ENCODE measurements at regions of chr22 and their contacts with region 1.

Region 1: DNA sequence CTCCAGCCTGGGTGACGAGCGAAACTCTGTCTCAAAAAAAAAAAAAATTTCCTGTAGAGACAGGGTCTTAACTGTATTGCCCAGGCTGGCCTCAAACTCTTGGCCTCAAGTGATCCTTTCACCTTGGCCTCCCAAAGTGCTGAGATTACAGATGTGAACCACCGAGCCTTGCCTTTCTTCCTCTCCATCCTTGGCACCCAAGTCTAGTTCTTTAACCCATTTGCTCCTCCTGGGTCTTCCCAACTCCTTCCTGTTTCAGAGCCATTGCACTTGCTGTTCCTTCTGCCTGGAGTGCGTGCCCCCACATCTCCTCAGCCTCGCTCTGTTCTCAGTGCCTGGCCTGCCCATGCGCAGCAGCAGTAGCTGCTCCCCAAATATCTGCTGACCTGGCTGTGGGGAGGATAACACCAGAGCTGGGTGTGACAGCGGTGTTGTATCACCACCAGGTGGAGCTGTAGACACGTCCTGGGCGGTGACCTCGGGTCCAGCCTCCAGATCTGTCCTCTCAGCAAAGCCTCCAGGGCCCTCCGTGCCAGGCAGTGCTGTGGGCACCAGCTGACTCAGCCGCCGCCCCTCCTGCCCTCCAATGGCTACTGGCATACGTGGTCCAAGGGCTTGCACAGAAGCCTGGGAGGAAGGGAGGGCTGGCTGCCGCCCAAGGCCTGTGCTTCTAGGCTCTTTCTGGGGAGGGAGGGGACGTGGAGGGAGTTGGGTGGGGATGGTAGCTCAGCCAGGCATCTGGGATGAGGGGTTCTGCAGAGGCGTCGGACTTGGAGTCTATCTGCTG is 22.0 kb downstream of the TEF start:
- DNase-seq: peak; percentile 86 to 87 (median 86)
- H3K4me3 ChIP-seq: no peak overlapping the region
- H3K27ac ChIP-seq: no peak overlapping the region
- H3K4me1 ChIP-seq: peaks cover 11% of the 10 kb centered on the region
- H3K27me3 ChIP-seq: no peaks in the 10 kb centered on the region
- CTCF ChIP-seq: peak; percentile 93 to 97 (median 97)
- EP300 ChIP-seq: no peak
- POLR2A ChIP-seq: no peak

Region 2: DNA sequence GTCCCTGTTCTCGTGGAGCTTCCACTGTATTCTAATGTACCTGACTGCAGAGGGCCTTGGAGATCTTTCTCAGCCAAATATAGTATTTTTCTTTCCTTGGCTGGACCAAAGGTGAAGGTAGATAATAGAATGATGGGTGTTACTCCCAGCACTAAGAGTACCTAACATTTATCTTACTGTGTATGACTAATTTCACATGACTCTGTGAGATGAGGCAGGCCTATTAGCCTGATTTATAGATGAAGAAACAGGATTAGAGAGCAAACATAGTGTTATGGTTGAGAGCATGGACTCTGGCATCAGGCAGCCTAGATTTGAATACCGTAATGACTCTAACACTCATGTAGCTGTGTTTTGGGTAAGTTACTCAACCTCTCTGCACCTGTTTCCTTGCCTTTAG is 67.8 kb after region 1 on chr22:
- intact Hi-C with region 1: loop called in 1 of 4 experiments (anchors 2 kb)
- DNase-seq: no peak
- H3K4me3 ChIP-seq: no peak overlapping the region
- H3K27ac ChIP-seq: no peak overlapping the region
- H3K4me1 ChIP-seq: peaks cover 4% of the 10 kb centered on the region
- H3K27me3 ChIP-seq: no peaks in the 10 kb centered on the region
- CTCF ChIP-seq: no peak
- EP300 ChIP-seq: no peak
- POLR2A ChIP-seq: no peak

Region 3: GRCh38 chr22:41517172-41518047 is 113.7 kb after region 1 on chr22:
- intact Hi-C with region 1: loop called (anchors 2 to 5 kb)
- DNase-seq: peak; percentile 72 to 86 (median 84)
- H3K4me3 ChIP-seq: no peak overlapping the region
- H3K27ac ChIP-seq: no peak overlapping the region
- H3K4me1 ChIP-seq: peaks cover 8% of the 10 kb centered on the region
- H3K27me3 ChIP-seq: no peaks in the 10 kb centered on the region
- CTCF ChIP-seq: peak; percentile 83 to 89 (median 86)
- EP300 ChIP-seq: no peak
- POLR2A ChIP-seq: no peak

Region 4: DNA sequence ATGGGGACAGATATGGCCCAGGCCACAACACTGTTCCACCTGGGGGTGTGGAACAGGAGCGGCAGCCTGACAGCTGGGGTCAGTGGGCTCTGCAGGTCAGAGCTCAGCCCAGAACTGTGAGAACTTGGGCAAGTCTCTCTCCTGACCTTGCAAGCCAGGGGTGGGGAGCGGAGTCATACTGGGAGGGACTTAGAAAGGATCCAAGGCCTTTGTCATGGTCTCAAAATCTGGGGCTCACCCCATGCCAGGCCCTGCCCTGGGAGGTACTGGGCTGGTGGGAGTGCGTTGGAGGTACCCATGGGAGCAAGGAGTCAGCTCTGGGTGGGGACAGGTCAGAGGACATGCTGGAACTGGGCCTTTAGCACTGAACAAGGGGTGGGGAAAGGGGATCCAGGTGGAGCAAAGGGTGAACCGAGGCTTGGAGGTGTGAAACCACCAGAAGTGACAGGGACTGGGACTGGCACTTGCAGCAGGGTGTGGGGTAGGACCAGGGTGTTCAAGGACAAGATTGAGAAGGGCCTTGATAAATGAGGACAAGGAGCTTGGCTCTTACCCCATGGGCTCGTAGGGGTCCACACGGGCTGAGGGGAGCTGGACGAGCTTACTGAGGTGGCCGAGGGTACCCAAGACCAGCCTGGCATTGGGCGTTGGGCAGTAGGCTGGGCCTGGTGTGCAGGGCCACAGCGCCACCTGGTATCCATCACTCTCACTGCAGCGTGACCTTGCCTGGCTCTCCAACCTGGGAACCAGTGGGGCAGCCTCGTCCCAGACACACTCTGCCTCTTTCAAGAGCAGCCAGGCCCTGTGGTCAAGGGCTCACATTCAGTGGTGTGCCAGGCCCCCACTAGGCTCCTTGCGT is 193.3 kb after region 1 on chr22:
- intact Hi-C with region 1: loop called in 2 of 4 experiments (anchors 5 to 10 kb)
- DNase-seq: peak; percentile 69 to 82 (median 76)
- H3K4me3 ChIP-seq: no peak overlapping the region
- H3K27ac ChIP-seq: peak overlapping the region; percentile 62 to 65
- H3K4me1 ChIP-seq: peaks cover 18% of the 10 kb centered on the region
- H3K27me3 ChIP-seq: no peaks in the 10 kb centered on the region
- CTCF ChIP-seq: peak; percentile 69 to 90 (median 82)
- EP300 ChIP-seq: no peak
- POLR2A ChIP-seq: no peak

Measured in ovary (tissue), 10 donors.